Head of caudate nucleus (tissue), 42 donors: ENCODE measurements at regions of chr11 and their contacts with region 1.

Region 1: GRCh38 chr11:133082851-133083488 is 449.3 kb downstream of the OPCML start:
- DNase-seq: peak; percentile 22 to 88 (median 75)

Region 2: DNA sequence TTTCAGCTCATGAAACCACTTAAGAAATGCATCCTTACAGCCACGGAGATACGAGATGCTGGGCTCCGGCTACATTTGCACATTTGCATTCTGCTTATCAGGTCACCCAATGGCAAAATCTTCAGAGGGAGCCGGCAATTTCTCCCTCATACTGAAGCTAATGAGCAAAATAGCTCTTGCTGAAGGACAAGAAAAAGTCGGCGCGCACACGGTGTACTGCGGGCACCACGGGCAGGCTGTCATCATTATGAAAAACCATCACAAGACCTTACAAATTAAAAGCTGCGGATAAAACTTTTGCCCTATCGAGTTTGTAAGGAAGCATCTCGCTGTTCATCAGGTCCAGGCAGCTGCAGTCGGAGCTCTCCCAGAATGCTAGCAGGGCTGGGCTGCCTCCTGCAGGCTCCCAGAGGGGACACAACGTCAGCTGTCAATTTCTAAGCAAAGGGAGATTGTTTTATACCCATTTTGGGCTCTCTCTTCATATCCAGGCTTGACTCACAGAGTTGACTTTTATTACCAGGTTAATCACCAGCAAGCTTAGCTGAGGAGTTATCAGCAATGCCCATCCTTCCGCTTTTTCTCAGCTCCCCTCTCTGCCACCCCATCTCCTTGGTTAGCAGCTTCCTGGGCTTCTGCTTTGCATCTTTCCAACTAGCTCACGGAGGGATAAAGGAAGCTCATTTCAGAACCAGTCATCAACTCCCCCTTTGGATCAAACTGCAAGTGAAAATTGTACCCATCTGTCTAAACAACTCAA is 74.2 kb after region 1 on chr11:
- intact Hi-C with region 1: loop called (anchors 5 kb)
- DNase-seq: peak in 11 of 42 donors; percentile 13 to 58 (median 27)

Region 3: GRCh38 chr11:133834682-133835592 is 752.0 kb after region 1 on chr11:
- intact Hi-C with region 1: loop called (anchors 5 kb)
- DNase-seq: peak in 37 of 42 donors; percentile 19 to 87 (median 63)